ENCODE measurements at regions of chr18 and their contacts with region 1.

Region 1: DNA sequence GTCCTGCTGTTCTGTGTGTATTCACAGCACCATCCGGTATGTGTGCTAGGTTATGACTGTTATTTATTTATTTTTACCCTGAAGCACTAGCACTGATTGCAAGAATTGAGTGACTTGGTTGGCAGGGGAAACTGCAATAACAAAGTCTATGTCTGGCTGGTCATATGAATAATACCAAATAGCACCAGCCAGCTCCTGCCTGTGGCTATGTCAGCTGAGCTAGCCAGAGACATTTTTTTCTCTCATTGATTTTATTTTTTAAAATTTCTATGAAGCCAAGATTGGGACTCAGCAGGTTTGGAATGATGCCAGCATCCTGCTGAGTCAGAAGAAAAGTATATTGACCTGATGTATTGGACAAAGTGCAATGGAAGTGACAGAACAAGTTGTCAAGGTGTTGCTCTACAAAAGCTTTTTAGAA is 188.5 kb upstream of the CDH2 start:
- DNase-seq: peak in 1 of 2 donors; percentile 49
- ATAC-seq: no peak
- H3K4me3 ChIP-seq: no peak overlapping the region
- H3K27ac ChIP-seq: no peak overlapping the region
- H3K4me1 ChIP-seq: no peaks in the 10 kb centered on the region
- H3K27me3 ChIP-seq: no peaks in the 10 kb centered on the region

Region 2: GRCh38 chr18:28204154-28204553 is 161.3 kb before region 1 on chr18:
- intact Hi-C with region 1: loop called in 1 of 2 experiments (anchors 10 kb)
- DNase-seq: no peak
- ATAC-seq: no peak
- H3K4me3 ChIP-seq: no peak overlapping the region
- H3K27ac ChIP-seq: no peak overlapping the region
- H3K4me1 ChIP-seq: peaks cover 0 to 5% of the 10 kb centered on the region in 2 donors
- H3K27me3 ChIP-seq: no peaks in the 10 kb centered on the region

Region 3: DNA sequence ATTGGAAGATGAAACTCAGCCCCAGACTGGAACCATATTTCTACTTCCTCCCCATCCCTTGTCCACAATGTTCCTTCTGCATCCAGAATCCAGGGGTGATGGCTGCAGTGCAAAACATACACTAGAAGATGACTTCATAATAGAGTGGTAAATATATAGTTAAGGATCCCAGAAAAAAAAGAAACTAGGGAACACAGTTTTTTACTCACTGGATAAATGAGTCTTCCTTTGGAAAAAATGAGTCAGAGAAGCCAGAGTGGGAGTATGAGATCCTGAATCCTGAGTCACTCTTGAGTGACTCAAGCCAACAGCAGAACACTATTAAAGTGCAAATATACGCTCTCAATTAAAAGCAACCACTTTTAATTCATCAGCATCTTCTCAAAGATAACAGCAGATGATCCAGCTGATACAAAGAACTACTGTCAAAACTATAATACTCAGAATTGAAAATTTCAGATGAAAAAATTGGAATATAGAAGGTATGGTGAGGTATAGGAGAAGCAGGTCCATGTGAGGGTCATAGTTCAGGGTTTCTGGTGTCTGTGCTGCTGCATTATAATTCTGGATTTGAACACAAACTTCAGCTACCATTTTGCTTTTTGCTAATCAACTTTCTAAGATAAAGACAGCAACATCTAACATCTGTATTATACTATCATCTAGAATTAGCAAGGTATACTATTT is 798.7 kb after region 1 on chr18:
- intact Hi-C with region 1: loop called in 1 of 2 experiments (anchors 10 kb)
- DNase-seq: no peak
- ATAC-seq: peak; percentile 91
- H3K4me3 ChIP-seq: no peak overlapping the region
- H3K27ac ChIP-seq: no peak overlapping the region
- H3K4me1 ChIP-seq: peaks cover 0 to 2% of the 10 kb centered on the region in 2 donors
- H3K27me3 ChIP-seq: no peaks in the 10 kb centered on the region